ENCODE measurements at regions of chr17 and their contacts with region 1.

Region 1: GRCh38 chr17:44344939-44345453 is at the start of gene GRN:
- DNase-seq: peak; percentile 67 to 91 (median 83)
- ATAC-seq: peak; percentile 99
- H3K4me3 ChIP-seq: peak within 1 kb of the TSS; percentile 63 to 91
- H3K4me3 Mint-ChIP-seq: peak within 1 kb of the TSS; percentile 93
- H3K27ac ChIP-seq: peak within 1 kb of the TSS in 1 of 2 experiments; percentile 61
- H3K27ac Mint-ChIP-seq: peak within 1 kb of the TSS; percentile 70
- H3K4me1 ChIP-seq: peaks cover 12% of the 10 kb centered on the region
- H3K4me1 Mint-ChIP-seq: peaks cover 20% of the 10 kb centered on the region
- H3K27me3 ChIP-seq: no peaks in the 10 kb centered on the region
- H3K27me3 Mint-ChIP-seq: peaks cover 14% of the 10 kb centered on the region
- CTCF ChIP-seq: no peak
- total RNA-seq, gene GRN: 8.5 to 13.2 TPM

Region 2: DNA sequence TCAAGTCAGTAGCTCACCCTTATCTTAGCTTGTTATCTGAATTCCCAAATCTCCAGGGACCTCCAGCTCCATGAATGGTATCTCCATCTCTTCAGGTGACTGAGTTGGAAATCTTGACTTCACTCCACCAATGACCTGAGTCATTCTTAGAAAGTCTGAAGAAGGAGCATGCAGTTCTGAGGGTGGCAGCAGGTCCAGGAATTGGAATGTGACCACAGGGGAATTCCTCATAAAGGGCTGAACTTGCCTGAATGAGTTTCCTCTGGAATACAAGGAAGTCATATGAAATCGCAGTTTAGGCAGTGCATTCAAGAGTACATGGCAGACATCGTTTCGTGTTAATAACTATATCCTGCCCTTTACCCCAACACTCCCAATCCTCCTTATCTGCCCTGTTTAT is 378.7 kb before region 1 on chr17:
- CTCF ChIA-PET with region 1: no interaction called
- POLR2A ChIA-PET with region 1: no interaction called
- intact Hi-C with region 1: no loop called
- DNase-seq: no peak
- ATAC-seq: no peak
- H3K4me3 ChIP-seq: no peak overlapping the region
- H3K4me3 Mint-ChIP-seq: no peak overlapping the region
- H3K27ac ChIP-seq: no peak overlapping the region
- H3K27ac Mint-ChIP-seq: no peak overlapping the region
- H3K4me1 ChIP-seq: no peaks in the 10 kb centered on the region
- H3K4me1 Mint-ChIP-seq: no peaks in the 10 kb centered on the region
- H3K27me3 ChIP-seq: no peaks in the 10 kb centered on the region
- H3K27me3 Mint-ChIP-seq: peaks cover 8% of the 10 kb centered on the region
- CTCF ChIP-seq: no peak

Region 3: GRCh38 chr17:44141717-44142285 is 203.2 kb before region 1 on chr17 and contains the start of gene HROB:
- CTCF ChIA-PET with region 1: interaction called, 3 read pairs
- POLR2A ChIA-PET with region 1: no interaction called
- intact Hi-C with region 1: loop called in 1 of 2 experiments (anchors 1 kb)
- DNase-seq: peak; percentile 95 to 99 (median 98)
- ATAC-seq: peak; percentile 91
- H3K4me3 ChIP-seq: peak within 1 kb of the TSS; percentile 62 to 80
- H3K4me3 Mint-ChIP-seq: peak within 1 kb of the TSS; percentile 84
- H3K27ac ChIP-seq: peak within 1 kb of the TSS; percentile 49 to 78
- H3K27ac Mint-ChIP-seq: peak within 1 kb of the TSS; percentile 49
- H3K4me1 ChIP-seq: peaks cover 11% of the 10 kb centered on the region
- H3K4me1 Mint-ChIP-seq: peaks cover 10% of the 10 kb centered on the region
- H3K27me3 ChIP-seq: peaks cover 0 to 14% of the 10 kb centered on the region in 2 experiments
- H3K27me3 Mint-ChIP-seq: peaks cover 10% of the 10 kb centered on the region
- CTCF ChIP-seq: peak; percentile 75
- total RNA-seq, gene HROB: 4.0 to 4.9 TPM

Region 4: GRCh38 chr17:44218344-44219107 is 126.5 kb before region 1 on chr17:
- CTCF ChIA-PET with region 1: interaction called, 36 read pairs
- POLR2A ChIA-PET with region 1: interaction called, 6 read pairs
- intact Hi-C with region 1: no loop called
- DNase-seq: peak; percentile 71 to 96 (median 87)
- ATAC-seq: peak; percentile 55
- H3K4me3 ChIP-seq: peak overlapping the region; percentile 65 to 73
- H3K4me3 Mint-ChIP-seq: peak overlapping the region; percentile 74
- H3K27ac ChIP-seq: peak overlapping the region; percentile 46 to 78
- H3K27ac Mint-ChIP-seq: peak overlapping the region; percentile 96
- H3K4me1 ChIP-seq: peaks cover 56% of the 10 kb centered on the region
- H3K4me1 Mint-ChIP-seq: peaks cover 52% of the 10 kb centered on the region
- H3K27me3 ChIP-seq: no peaks in the 10 kb centered on the region
- H3K27me3 Mint-ChIP-seq: no peaks in the 10 kb centered on the region
- CTCF ChIP-seq: peak; percentile 53

Region 5: DNA sequence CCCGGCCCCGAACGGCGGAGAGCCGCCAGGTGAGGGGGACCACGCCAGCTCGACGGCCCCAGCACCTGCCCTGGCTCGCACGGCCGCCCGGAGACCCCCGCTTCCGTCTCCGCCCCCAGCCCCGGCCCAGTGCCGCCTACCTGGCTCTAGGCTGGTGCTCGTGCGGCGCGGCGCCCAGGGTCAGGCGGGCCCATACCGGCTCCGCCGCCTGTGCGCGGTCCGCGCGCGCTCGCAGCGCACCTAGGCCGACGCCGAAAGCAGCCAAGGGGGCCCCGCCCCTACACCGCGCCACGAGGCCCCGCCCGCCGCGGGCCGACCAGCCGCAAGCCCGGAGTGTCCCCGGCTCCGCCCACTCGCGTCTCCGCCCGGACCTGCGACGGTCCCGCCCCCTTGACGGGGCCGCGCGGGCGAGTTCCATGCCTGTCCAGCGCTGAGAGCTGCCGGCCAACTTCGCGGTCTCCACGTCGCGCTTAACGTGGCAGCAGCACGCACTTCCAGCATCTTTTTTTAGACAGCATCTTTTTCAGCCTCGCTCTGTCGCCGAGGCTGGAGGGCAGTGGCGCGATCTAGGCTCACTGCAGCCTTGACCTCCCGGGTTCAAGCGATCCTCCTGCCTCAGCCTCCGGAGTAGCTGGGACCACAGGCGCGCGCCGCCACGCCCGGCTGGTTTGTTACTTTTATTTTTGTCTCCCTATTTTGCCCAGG is 20.3 kb before region 1 on chr17 and contains the start of gene SLC25A39:
- CTCF ChIA-PET with region 1: interaction called, 15 read pairs
- POLR2A ChIA-PET with region 1: interaction called, 4 read pairs
- intact Hi-C with region 1: loop called in 1 of 2 experiments (anchors 1 kb)
- DNase-seq: peak; percentile 90 to 98 (median 96)
- ATAC-seq: peak; percentile 72
- H3K4me3 ChIP-seq: peak within 1 kb of the TSS; percentile 84 to 91
- H3K4me3 Mint-ChIP-seq: peak within 1 kb of the TSS; percentile 88
- H3K27ac ChIP-seq: peak within 1 kb of the TSS; percentile 88 to 93
- H3K27ac Mint-ChIP-seq: peak within 1 kb of the TSS; percentile 96
- H3K4me1 ChIP-seq: peaks cover 14% of the 10 kb centered on the region
- H3K4me1 Mint-ChIP-seq: peaks cover 30% of the 10 kb centered on the region
- H3K27me3 ChIP-seq: no peaks in the 10 kb centered on the region
- H3K27me3 Mint-ChIP-seq: no peaks in the 10 kb centered on the region
- CTCF ChIP-seq: no peak
- total RNA-seq, gene SLC25A39: 73.1 to 77.7 TPM

Region 6: GRCh38 chr17:44363613-44364159 is 18.7 kb after region 1 on chr17 and contains the start of gene FAM171A2:
- CTCF ChIA-PET with region 1: interaction called, 53 read pairs
- POLR2A ChIA-PET with region 1: no interaction called
- intact Hi-C with region 1: loop called in 1 of 2 experiments (anchors 1 kb)
- DNase-seq: peak; percentile 44 to 86 (median 61)
- ATAC-seq: peak; percentile 92
- H3K4me3 ChIP-seq: peak within 1 kb of the TSS; percentile 51 to 59
- H3K4me3 Mint-ChIP-seq: peak within 1 kb of the TSS; percentile 80
- H3K27ac ChIP-seq: no peak within 1 kb of the TSS
- H3K27ac Mint-ChIP-seq: no peak within 1 kb of the TSS
- H3K4me1 ChIP-seq: peaks cover 3% of the 10 kb centered on the region
- H3K4me1 Mint-ChIP-seq: peaks cover 8% of the 10 kb centered on the region
- H3K27me3 ChIP-seq: peaks cover 0 to 12% of the 10 kb centered on the region in 2 experiments
- H3K27me3 Mint-ChIP-seq: peaks cover 19% of the 10 kb centered on the region
- CTCF ChIP-seq: peak; percentile 89
- total RNA-seq, gene FAM171A2: 0.24 to 0.44 TPM

Measured in CD8-positive, alpha-beta T cell (primary cell).